Activated CD4-positive, alpha-beta T cell treated with anti-CD3 and anti-CD28 coated beads, Interleukin-2, amount 10 ng/mL, durations not matched to agents 24 days and 14 days (primary cell): ENCODE measurements at regions of chr2 and their contacts with region 1.

Region 1: GRCh38 chr2:143110758-143111428 is 18.3 kb upstream of the ARHGAP15 start:
- DNase-seq: peak; percentile 89
- H3K4me3 Mint-ChIP-seq: peak overlapping the region; percentile 55
- H3K27ac Mint-ChIP-seq: peak overlapping the region; percentile 83
- H3K4me1 Mint-ChIP-seq: peaks cover 38% of the 10 kb centered on the region
- H3K27me3 Mint-ChIP-seq: peaks cover 4% of the 10 kb centered on the region

Region 2: GRCh38 chr2:143034292-143035074 is 76.4 kb before region 1 on chr2:
- intact Hi-C with region 1: loop called (anchors 2 kb)
- DNase-seq: peak; percentile 88
- H3K4me3 Mint-ChIP-seq: no peak overlapping the region
- H3K27ac Mint-ChIP-seq: no peak overlapping the region
- H3K4me1 Mint-ChIP-seq: peaks cover 11% of the 10 kb centered on the region
- H3K27me3 Mint-ChIP-seq: peaks cover 3% of the 10 kb centered on the region

Region 3: DNA sequence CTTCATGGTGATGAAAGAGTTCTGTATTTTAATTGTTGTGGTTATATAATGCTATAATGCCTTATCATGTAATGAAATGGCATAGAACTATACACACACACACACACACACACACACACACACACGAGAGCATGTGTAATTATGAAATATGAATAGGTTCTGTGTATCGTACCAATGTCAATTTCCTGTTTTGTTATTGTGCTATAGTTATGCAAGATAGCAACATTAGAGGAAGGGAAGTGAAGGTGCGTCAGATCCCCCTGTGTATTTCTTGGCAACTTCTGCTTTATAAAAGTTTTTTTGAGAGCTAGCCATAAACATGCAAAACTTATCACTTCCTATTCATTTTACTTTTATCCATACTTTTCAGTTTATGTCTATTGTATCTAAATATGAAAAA is 42.4 kb before region 1 on chr2:
- intact Hi-C with region 1: no loop called
- DNase-seq: no peak
- H3K4me3 Mint-ChIP-seq: no peak overlapping the region
- H3K27ac Mint-ChIP-seq: no peak overlapping the region
- H3K4me1 Mint-ChIP-seq: no peaks in the 10 kb centered on the region
- H3K27me3 Mint-ChIP-seq: peaks cover 23% of the 10 kb centered on the region

Region 4: GRCh38 chr2:143121957-143122356 is 11.1 kb after region 1 on chr2:
- intact Hi-C with region 1: loop called (anchors 1 kb)
- DNase-seq: no peak
- H3K4me3 Mint-ChIP-seq: no peak overlapping the region
- H3K27ac Mint-ChIP-seq: no peak overlapping the region
- H3K4me1 Mint-ChIP-seq: peaks cover 23% of the 10 kb centered on the region
- H3K27me3 Mint-ChIP-seq: no peaks in the 10 kb centered on the region

Region 5: GRCh38 chr2:143162123-143162837 is 51.4 kb after region 1 on chr2:
- intact Hi-C with region 1: loop called (anchors 1 kb)
- DNase-seq: peak; percentile 84
- H3K4me3 Mint-ChIP-seq: no peak overlapping the region
- H3K27ac Mint-ChIP-seq: peak overlapping the region; percentile 15
- H3K4me1 Mint-ChIP-seq: peaks cover 59% of the 10 kb centered on the region
- H3K27me3 Mint-ChIP-seq: no peaks in the 10 kb centered on the region

Region 6: DNA sequence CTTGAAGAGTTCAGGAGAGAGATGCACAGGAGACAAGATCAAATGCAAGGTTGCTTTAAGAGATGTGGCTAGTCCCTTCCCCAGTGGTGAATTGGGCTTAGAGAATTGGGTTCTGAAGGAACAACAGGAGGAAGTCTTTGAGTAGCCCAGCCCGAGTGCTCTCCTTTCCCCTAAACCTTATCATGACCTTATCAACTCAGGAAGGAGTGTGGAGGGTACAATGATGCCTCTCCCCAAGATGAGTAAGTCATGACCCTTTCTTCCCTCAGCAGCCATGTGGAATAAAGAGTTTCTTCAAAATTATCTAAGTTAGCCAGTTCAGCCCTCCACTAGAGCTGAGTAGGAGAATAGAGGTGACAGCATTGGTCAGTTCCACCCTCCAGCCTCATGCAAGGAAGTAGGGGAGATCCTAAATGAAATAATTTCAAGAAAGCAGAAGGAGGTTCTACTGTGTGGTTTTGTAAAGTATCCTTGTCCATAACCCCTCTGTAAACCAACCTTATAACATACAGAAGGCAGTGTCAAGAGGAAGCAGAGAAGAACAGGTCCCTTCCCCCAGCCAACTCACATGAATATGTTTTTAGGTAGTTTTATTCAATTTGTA is 106.7 kb after region 1 on chr2:
- intact Hi-C with region 1: loop called (anchors 1 kb)
- DNase-seq: no peak
- H3K4me3 Mint-ChIP-seq: no peak overlapping the region
- H3K27ac Mint-ChIP-seq: peak overlapping the region; percentile 79
- H3K4me1 Mint-ChIP-seq: peaks cover 40% of the 10 kb centered on the region
- H3K27me3 Mint-ChIP-seq: no peaks in the 10 kb centered on the region

Region 7: DNA sequence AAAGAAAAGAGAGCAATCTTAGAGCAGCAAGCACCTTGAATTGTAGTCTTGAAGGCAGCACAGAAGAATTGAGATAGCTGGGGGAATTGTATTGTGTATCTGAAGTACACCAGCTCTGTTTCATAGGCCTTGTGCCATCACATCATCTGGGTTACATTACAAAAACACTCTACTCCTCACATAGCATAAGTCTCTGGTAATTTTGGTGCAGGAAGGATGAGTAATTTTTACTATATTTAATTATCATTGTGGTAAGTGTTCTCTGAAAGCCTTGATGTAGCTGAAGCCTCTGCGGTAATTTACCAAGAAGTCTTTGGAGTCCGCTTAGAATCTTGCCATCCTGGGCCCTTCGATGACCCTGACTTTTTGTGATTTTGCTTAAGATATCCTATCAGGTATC is 309.4 kb after region 1 on chr2:
- intact Hi-C with region 1: no loop called
- DNase-seq: no peak
- H3K4me3 Mint-ChIP-seq: no peak overlapping the region
- H3K27ac Mint-ChIP-seq: no peak overlapping the region
- H3K4me1 Mint-ChIP-seq: peaks cover 22% of the 10 kb centered on the region
- H3K27me3 Mint-ChIP-seq: no peaks in the 10 kb centered on the region